AG04449 (cell line): ENCODE measurements at regions of chr6 and their contacts with region 1.

Region 1: GRCh38 chr6:31702819-31703522 is at the start of gene ABHD16A:
- DNase-seq: peak; percentile 84
- H3K4me3 ChIP-seq: peak within 1 kb of the TSS; percentile 84
- CTCF ChIP-seq: no peak

Region 2: GRCh38 chr6:31689249-31690110 is 13.5 kb before region 1 on chr6:
- CTCF ChIA-PET with region 1: interaction called, 11 read pairs
- POLR2A ChIA-PET with region 1: interaction called, 6 read pairs
- DNase-seq: no peak
- H3K4me3 ChIP-seq: no peak overlapping the region
- CTCF ChIP-seq: peak; percentile 48

Region 3: DNA sequence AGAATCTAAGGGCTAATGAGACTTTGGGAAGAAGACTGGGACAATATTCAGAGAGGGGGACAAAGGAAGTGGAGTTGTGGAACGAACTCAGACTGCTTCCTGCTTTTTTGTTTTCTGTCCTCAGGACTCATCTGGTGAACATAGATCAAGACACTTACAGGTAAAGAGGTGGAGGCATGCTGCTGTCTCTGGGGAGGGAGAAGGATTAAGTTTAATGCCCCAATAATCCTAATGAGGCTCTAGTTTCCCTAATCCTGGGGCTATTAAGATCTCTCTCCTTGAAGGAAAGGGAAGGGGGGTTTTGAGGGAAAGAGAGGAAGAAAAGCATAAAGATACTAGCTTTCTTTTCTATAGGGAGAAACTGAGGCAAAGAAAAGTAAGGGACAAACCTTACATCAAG is 41.5 kb after region 1 on chr6:
- CTCF ChIA-PET with region 1: no interaction called
- POLR2A ChIA-PET with region 1: no interaction called
- DNase-seq: no peak
- H3K4me3 ChIP-seq: no peak overlapping the region
- CTCF ChIP-seq: no peak